ENCODE measurements at regions of chr2 and their contacts with region 1.

Region 1: DNA sequence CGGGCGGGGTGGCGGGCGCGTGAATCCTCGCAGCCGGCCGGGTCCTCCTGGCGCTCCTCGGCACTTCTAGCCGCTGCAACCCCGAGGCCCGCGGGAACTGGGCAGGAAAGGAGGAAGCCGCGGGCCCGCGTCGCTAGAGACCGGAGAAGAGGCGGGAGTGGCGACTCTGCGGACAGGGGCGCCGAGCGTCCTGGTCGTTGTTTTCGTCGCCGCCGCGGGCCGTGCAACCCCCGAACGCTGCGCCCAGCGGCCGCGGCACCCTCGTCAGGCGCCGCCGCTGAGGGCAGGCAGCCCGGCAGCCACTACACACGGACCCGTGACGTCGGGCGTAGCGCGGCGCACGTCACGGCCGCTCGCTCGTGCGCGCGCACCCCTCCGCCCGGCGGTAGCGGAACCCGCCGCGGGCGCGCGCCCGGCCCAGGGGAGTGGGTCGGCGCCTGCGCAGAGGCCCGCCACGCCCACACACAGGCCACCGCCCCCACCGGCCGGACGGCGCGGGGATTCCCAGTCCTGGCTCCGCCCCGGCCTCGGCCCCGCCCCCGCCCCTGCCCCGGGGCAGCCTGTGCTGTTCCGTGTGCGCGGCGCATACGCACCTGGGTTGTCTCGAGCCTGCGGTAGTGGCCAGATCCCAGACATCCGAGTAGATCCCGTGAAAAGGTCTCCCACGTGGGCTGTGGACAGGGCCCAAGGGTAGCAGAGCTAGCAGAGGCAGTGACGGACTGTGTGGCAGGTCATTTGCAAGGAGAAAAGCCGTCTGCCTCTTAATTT is at the start of gene MAP3K2:
- DNase-seq: peak; percentile 91 to 94 (median 94)
- H3K4me3 ChIP-seq: peak within 1 kb of the TSS; percentile 70 to 90 (median 84)
- H3K27ac ChIP-seq: peak within 1 kb of the TSS; percentile 92 to 95
- H3K4me1 ChIP-seq: peaks cover 20 to 65% (median 37%) of the 10 kb centered on the region in 4 experiments
- H3K27me3 ChIP-seq: no peaks in the 10 kb centered on the region

Region 2: GRCh38 chr2:126172785-126173184 is 1215.1 kb before region 1 on chr2:
- CTCF ChIA-PET with region 1: no interaction called
- POLR2A ChIA-PET with region 1: no interaction called
- DNase-seq: no peak
- H3K4me3 ChIP-seq: no peak overlapping the region
- H3K27ac ChIP-seq: no peak overlapping the region
- H3K4me1 ChIP-seq: no peaks in the 10 kb centered on the region
- H3K27me3 ChIP-seq: no peaks in the 10 kb centered on the region

Region 3: GRCh38 chr2:127401757-127402695 is 14.2 kb after region 1 on chr2:
- CTCF ChIA-PET with region 1: interaction called, 17 read pairs
- POLR2A ChIA-PET with region 1: interaction called, 5 read pairs
- DNase-seq: peak in 1 of 3 donors; percentile 37
- H3K4me3 ChIP-seq: no peak overlapping the region
- H3K27ac ChIP-seq: no peak overlapping the region
- H3K4me1 ChIP-seq: peaks cover 0 to 21% (median 14%) of the 10 kb centered on the region in 4 experiments
- H3K27me3 ChIP-seq: no peaks in the 10 kb centered on the region

Region 4: DNA sequence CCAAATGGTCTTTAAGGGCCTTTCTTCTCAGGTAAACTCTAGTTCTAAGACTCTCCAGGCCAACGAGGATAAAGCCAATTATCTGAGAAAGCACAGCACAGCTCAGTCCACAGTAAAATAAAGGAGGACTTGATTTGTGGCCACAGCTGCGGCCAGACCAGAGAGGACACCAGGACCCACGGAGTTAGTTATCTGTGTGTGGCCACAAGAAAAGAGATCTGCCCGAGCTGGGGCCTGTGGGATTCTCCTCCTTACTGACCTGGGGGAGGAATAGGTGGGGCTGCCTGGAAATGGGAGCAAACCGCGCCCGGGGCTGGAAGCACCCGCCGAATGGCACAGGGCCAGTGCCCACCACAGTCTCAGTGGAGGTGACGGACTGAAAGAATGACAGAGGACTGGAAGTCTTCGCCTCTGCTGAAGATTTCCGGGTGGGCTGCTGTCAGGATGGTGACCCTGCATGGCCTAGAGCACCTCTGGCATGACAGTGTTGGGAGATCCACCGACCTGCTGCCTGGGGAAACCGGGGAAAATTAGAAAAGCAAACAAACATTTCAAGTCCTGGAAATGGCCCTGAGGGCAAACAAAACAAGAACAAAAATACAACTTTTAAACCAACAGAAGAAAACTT is 43.7 kb after region 1 on chr2:
- CTCF ChIA-PET with region 1: no interaction called
- POLR2A ChIA-PET with region 1: no interaction called
- DNase-seq: no peak
- H3K4me3 ChIP-seq: no peak overlapping the region
- H3K27ac ChIP-seq: no peak overlapping the region
- H3K4me1 ChIP-seq: no peaks in the 10 kb centered on the region
- H3K27me3 ChIP-seq: no peaks in the 10 kb centered on the region